AG04450 (cell line): ENCODE measurements at regions of chr1 and their contacts with region 1.

Region 1: DNA sequence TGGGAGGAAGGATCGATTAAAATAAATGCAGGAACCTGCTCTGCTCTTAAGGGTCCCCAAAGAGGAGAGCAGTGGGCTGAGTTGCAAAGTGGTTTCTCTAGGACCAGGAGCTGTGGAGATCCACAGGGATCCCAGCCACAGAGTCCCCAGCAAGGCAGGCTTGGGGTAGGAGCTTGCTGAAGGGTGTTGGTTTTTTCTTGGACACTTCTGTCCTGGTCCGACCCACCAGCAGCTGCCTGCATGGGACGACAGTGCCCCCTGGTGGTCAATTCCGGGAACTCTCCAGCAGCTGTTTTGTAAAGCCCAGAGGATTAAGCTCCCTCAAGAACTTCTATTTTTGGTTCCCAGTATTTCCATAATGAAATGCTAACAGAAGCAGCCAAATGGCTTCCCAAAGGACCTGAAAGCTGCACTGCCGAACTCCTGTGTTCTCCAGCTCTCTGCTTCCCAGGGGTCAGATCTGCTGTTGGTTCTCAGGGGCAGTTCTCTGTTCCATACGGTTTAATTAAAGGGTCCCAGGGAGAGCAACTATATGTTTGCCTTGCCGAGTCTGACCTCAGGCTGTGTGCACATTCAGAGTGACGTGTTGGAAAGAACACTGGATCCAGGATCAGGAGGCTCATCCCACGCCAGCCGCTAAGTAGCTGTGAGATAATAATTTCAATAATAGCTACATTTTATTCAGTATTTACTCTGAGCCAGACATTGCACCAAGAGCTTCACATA is 23.2 kb downstream of the NENF start:
- DNase-seq: peak; percentile 72
- H3K4me3 ChIP-seq: peak overlapping the region; percentile 4; the same call in 1 of the 2 replicates
- H3K27ac ChIP-seq: no peak overlapping the region
- H3K27me3 ChIP-seq: no peaks in the 10 kb centered on the region
- CTCF ChIP-seq: peak; percentile 96

Region 2: GRCh38 chr1:211698161-211699026 is 757.6 kb before region 1 on chr1:
- CTCF ChIA-PET with region 1: interaction called, 19 read pairs
- POLR2A ChIA-PET with region 1: no interaction called
- DNase-seq: peak; percentile 7
- H3K4me3 ChIP-seq: peak overlapping the region; percentile 29; the same call in 1 of the 2 replicates
- H3K27ac ChIP-seq: no peak overlapping the region
- H3K27me3 ChIP-seq: peaks cover 27% of the 10 kb centered on the region
- CTCF ChIP-seq: peak; percentile 95

Region 3: DNA sequence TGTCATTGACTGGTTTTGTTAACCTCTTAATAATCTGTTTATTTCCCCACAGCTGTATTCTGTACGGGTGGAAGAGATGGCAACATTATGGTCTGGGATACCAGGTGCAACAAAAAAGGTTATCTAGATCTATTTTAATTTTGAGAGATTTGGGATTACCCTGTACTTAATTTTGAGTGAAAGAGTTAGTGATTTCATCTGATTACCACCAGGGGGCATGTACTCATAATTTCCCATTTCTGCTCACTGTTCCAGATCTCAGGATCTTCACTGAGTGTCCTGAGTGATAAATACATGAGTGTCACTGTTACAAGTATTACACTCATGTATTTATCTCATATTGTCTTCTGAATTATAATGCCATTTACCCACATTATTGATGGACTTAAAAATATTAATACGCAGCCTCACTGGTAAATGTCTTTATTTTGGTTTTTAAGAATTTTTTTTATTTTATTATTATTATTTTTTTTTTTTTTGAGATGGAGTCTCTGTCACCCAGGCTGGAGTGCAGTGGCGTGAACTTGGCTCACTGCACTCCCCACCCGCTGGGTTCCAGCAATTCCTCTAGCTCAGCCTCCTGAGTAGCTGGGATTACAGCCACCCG is 393.0 kb before region 1 on chr1:
- CTCF ChIA-PET with region 1: interaction called, 214 read pairs
- POLR2A ChIA-PET with region 1: no interaction called
- DNase-seq: peak; percentile 13
- H3K4me3 ChIP-seq: no peak overlapping the region
- H3K27ac ChIP-seq: no peak overlapping the region
- H3K27me3 ChIP-seq: no peaks in the 10 kb centered on the region
- CTCF ChIP-seq: peak; percentile 69

Region 4: GRCh38 chr1:212368073-212368484 is 87.9 kb before region 1 on chr1:
- CTCF ChIA-PET with region 1: interaction called, 58 read pairs
- POLR2A ChIA-PET with region 1: no interaction called
- DNase-seq: peak; percentile 47
- H3K4me3 ChIP-seq: no peak overlapping the region
- H3K27ac ChIP-seq: no peak overlapping the region
- H3K27me3 ChIP-seq: no peaks in the 10 kb centered on the region
- CTCF ChIP-seq: peak; percentile 95

Region 5: DNA sequence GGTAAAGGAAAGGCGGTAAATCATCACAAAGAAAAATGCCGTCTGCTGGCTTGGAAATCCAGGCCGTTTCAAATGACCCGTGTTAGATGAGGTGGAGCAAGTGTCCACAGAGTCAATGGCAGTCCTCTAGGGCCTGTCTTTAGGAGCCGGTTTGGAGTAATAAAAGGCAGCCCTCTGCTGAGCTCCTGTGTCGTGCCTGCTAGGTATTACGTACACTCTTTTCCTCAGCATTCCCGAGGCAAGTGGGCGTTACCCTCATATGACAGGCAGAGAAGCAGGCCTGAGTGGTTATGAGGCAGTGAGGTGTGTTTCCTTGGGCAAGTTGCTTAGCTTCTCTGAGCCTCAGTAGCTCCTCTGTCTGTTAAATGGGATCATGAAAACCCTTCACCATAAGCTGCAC is 15.5 kb before region 1 on chr1:
- CTCF ChIA-PET with region 1: interaction called, 31 read pairs
- POLR2A ChIA-PET with region 1: no interaction called
- DNase-seq: no peak
- H3K4me3 ChIP-seq: no peak overlapping the region
- H3K27ac ChIP-seq: no peak overlapping the region
- H3K27me3 ChIP-seq: no peaks in the 10 kb centered on the region
- CTCF ChIP-seq: no peak

Region 6: GRCh38 chr1:212782422-212783154 is 326.6 kb after region 1 on chr1:
- CTCF ChIA-PET with region 1: interaction called, 14 read pairs
- POLR2A ChIA-PET with region 1: no interaction called
- DNase-seq: no peak
- H3K4me3 ChIP-seq: no peak overlapping the region
- H3K27ac ChIP-seq: no peak overlapping the region
- H3K27me3 ChIP-seq: no peaks in the 10 kb centered on the region
- CTCF ChIP-seq: peak; percentile 65